IMR-90 (cell line): ENCODE measurements at regions of chr7 and their contacts with region 1.

Region 1: GRCh38 chr7:126803060-126803665 is 449.6 kb downstream of the GRM8 start:
- DNase-seq: peak; percentile 51
- ATAC-seq: peak; percentile 75
- H3K4me3 ChIP-seq: no peak overlapping the region
- H3K27ac ChIP-seq: no peak overlapping the region
- H3K4me1 ChIP-seq: no peaks in the 10 kb centered on the region
- H3K27me3 ChIP-seq: no peaks in the 10 kb centered on the region
- CTCF ChIP-seq: peak; percentile 59
- POLR2A ChIP-seq: no peak
- RAD21 ChIP-seq: peak; percentile 63

Region 2: DNA sequence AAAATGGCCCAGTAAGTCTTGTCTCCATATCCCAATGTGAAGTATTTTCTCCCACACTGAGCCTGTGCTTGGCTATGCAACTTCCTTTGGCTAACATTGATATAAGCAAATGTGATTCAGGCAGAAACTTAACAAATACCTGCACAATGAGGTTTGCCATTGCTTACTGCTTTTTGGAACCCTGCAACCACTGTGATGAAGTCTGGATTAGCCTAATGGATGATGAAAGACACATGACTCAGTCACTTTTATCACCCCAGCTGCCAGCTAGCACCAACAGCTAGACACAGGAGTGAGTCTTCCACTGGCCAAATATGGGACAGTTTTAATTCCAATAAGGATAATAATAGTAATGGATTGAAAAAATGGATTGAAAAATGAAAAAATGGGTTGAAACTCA is 404.9 kb before region 1 on chr7:
- CTCF ChIA-PET with region 1: no interaction called
- POLR2A ChIA-PET with region 1: no interaction called
- dilution Hi-C with region 1: no loop called
- in situ Hi-C with region 1: no loop called
- intact Hi-C with region 1: no loop called
- DNase-seq: no peak
- ATAC-seq: no peak
- H3K4me3 ChIP-seq: no peak overlapping the region
- H3K27ac ChIP-seq: no peak overlapping the region
- H3K4me1 ChIP-seq: no peaks in the 10 kb centered on the region
- H3K27me3 ChIP-seq: no peaks in the 10 kb centered on the region
- CTCF ChIP-seq: no peak
- POLR2A ChIP-seq: no peak
- RAD21 ChIP-seq: no peak

Region 3: DNA sequence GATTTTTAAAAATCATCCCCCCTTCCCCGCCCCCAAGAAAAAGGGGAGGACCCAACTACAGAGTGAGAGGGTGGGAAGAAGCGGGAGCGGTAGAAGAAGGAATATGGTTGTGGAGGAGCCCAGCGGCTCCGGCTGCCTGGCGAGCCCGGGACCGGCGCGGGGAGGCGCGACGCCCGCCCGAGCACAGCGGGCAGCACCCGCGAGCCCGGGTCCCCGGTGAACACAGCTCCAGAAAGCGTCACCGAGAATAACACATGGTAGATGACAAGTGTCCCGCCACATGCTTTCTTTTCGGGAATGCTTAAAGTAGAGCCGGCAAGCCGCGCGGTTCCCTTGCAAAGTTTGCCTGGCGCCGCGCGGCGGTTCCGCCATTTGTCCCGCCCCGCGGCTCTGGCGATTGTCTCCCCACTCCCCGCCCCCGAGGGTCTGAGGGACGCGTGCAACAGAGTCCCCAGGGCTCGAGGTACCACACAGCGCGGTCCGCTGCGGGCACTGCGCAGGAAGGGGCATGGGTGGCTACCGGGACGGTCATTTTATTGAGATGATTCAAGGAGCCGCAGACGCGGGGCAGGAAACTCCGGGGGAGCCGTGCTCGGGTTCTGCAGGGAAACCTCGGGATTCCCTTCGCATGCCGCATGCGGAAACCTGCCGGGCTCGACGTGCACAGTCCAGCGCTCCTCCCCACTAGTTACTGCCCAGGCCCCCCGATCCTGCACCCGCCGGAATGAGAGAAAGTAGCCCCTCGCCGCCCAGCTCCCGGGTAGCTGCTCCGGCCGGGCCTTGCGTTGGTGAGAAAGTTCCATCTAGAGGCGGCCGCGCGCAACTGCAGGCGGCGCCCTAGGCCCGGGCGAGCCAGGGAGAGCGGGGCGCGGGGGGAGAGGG is 450.4 kb after region 1 on chr7:
- CTCF ChIA-PET with region 1: interaction called, 7 read pairs
- POLR2A ChIA-PET with region 1: no interaction called
- dilution Hi-C with region 1: no loop called
- in situ Hi-C with region 1: no loop called
- intact Hi-C with region 1: loop called (anchors 2 kb)
- DNase-seq: peak; percentile 31
- ATAC-seq: peak; percentile 92
- H3K4me3 ChIP-seq: peak overlapping the region; percentile 63
- H3K27ac ChIP-seq: no peak overlapping the region
- H3K4me1 ChIP-seq: peaks cover 6% of the 10 kb centered on the region; the same call in 1 of the 2 replicates
- H3K27me3 ChIP-seq: peaks cover 37% of the 10 kb centered on the region
- CTCF ChIP-seq: peak; percentile 67
- POLR2A ChIP-seq: no peak
- RAD21 ChIP-seq: peak; percentile 52

Region 4: GRCh38 chr7:127447326-127447945 is 644.3 kb after region 1 on chr7:
- CTCF ChIA-PET with region 1: no interaction called
- POLR2A ChIA-PET with region 1: no interaction called
- dilution Hi-C with region 1: no loop called
- in situ Hi-C with region 1: no loop called
- intact Hi-C with region 1: loop called (anchors 10 kb)
- DNase-seq: peak; percentile 60
- ATAC-seq: peak; percentile 84
- H3K4me3 ChIP-seq: no peak overlapping the region
- H3K27ac ChIP-seq: no peak overlapping the region
- H3K4me1 ChIP-seq: no peaks in the 10 kb centered on the region
- H3K27me3 ChIP-seq: peaks cover 1% of the 10 kb centered on the region
- CTCF ChIP-seq: peak; percentile 57
- POLR2A ChIP-seq: no peak
- RAD21 ChIP-seq: peak; percentile 51

Region 5: GRCh38 chr7:127514499-127514898 is 711.3 kb after region 1 on chr7:
- CTCF ChIA-PET with region 1: interaction called, 5 read pairs
- POLR2A ChIA-PET with region 1: no interaction called
- dilution Hi-C with region 1: no loop called
- in situ Hi-C with region 1: loop called (anchors 25 kb)
- intact Hi-C with region 1: loop called (anchors 1 kb)
- DNase-seq: peak; percentile 39
- ATAC-seq: peak; percentile 79; the same call in 1 of the 2 replicates
- H3K4me3 ChIP-seq: no peak overlapping the region
- H3K27ac ChIP-seq: no peak overlapping the region
- H3K4me1 ChIP-seq: no peaks in the 10 kb centered on the region
- H3K27me3 ChIP-seq: no peaks in the 10 kb centered on the region
- CTCF ChIP-seq: peak; percentile 55
- POLR2A ChIP-seq: no peak
- RAD21 ChIP-seq: peak; percentile 66